ENCODE measurements at regions of chr18 and their contacts with region 1.

Region 1: GRCh38 chr18:3665780-3666525 is 216.0 kb downstream of the TGIF1 start:
- DNase-seq: peak; percentile 73 to 86 (median 78)
- ATAC-seq: peak; percentile 76 to 94 (median 90)
- H3K4me3 ChIP-seq: peak overlapping the region in 10 of 12 donors; percentile 20 to 43 (median 33)
- H3K27ac ChIP-seq: peak overlapping the region in 9 of 12 donors; percentile 8 to 68 (median 53)
- H3K4me1 ChIP-seq: peaks cover 0 to 27% (median 3%) of the 10 kb centered on the region in 12 donors
- H3K27me3 ChIP-seq: no peaks in the 10 kb centered on the region
- CTCF ChIP-seq: peak; percentile 87 to 98 (median 91)
- POLR2A ChIP-seq: no peak

Region 2: GRCh38 chr18:3297025-3297984 is 368.6 kb before region 1 on chr18:
- intact Hi-C with region 1: loop called in 1 of 10 experiments (anchors 5 kb)
- DNase-seq: peak; percentile 76 to 89 (median 84)
- ATAC-seq: peak; percentile 85 to 93 (median 92)
- H3K4me3 ChIP-seq: peak overlapping the region; percentile 15 to 76 (median 55)
- H3K27ac ChIP-seq: peak overlapping the region in 3 of 12 donors; percentile 7 to 39 (median 17)
- H3K4me1 ChIP-seq: peaks cover 0 to 12% (median 3%) of the 10 kb centered on the region in 12 donors
- H3K27me3 ChIP-seq: peaks cover 0 to 4% (median 0%) of the 10 kb centered on the region in 9 donors
- CTCF ChIP-seq: peak in 11 of 12 donors; percentile 21 to 53 (median 37)
- POLR2A ChIP-seq: no peak

Region 3: GRCh38 chr18:3447895-3448837 is 217.8 kb before region 1 on chr18:
- intact Hi-C with region 1: loop called in 8 of 10 experiments (anchors 2 to 10 kb)
- DNase-seq: peak; percentile 94 to 96 (median 96)
- ATAC-seq: peak; percentile 86 to 92 (median 87)
- H3K4me3 ChIP-seq: peak overlapping the region; percentile 65 to 93 (median 78)
- H3K27ac ChIP-seq: peak overlapping the region; percentile 92 to 100 (median 97)
- H3K4me1 ChIP-seq: peaks cover 0 to 27% (median 13%) of the 10 kb centered on the region in 12 donors
- H3K27me3 ChIP-seq: no peaks in the 10 kb centered on the region
- CTCF ChIP-seq: peak in 4 of 12 donors; percentile 3 to 31 (median 20)
- POLR2A ChIP-seq: peak in 1 of 2 donors; percentile 91

Region 4: GRCh38 chr18:3454365-3455089 is 211.4 kb before region 1 on chr18:
- intact Hi-C with region 1: loop called in 9 of 10 experiments (anchors 2 to 10 kb)
- DNase-seq: peak in 2 of 5 donors; percentile 35 to 48
- ATAC-seq: no peak
- H3K4me3 ChIP-seq: peak overlapping the region in 11 of 12 donors; percentile 8 to 93 (median 77)
- H3K27ac ChIP-seq: peak overlapping the region; percentile 36 to 100 (median 97)
- H3K4me1 ChIP-seq: peaks cover 0 to 53% (median 20%) of the 10 kb centered on the region in 12 donors
- H3K27me3 ChIP-seq: no peaks in the 10 kb centered on the region
- CTCF ChIP-seq: peak; percentile 49 to 84 (median 73)
- POLR2A ChIP-seq: no peak

Region 5: GRCh38 chr18:3605486-3605952 is 60.4 kb before region 1 on chr18:
- intact Hi-C with region 1: no loop called
- DNase-seq: no peak
- ATAC-seq: no peak
- H3K4me3 ChIP-seq: peak overlapping the region in 11 of 12 donors; percentile 5 to 61 (median 48)
- H3K27ac ChIP-seq: peak overlapping the region; percentile 70 to 94 (median 87)
- H3K4me1 ChIP-seq: peaks cover 7 to 51% (median 30%) of the 10 kb centered on the region in 12 donors
- H3K27me3 ChIP-seq: no peaks in the 10 kb centered on the region
- CTCF ChIP-seq: no peak
- POLR2A ChIP-seq: no peak

Region 6: GRCh38 chr18:3816610-3817363 is 150.8 kb after region 1 on chr18:
- intact Hi-C with region 1: no loop called
- DNase-seq: no peak
- ATAC-seq: peak in 2 of 4 donors; percentile 70 to 78
- H3K4me3 ChIP-seq: no peak overlapping the region
- H3K27ac ChIP-seq: no peak overlapping the region
- H3K4me1 ChIP-seq: no peaks in the 10 kb centered on the region
- H3K27me3 ChIP-seq: no peaks in the 10 kb centered on the region
- CTCF ChIP-seq: no peak
- POLR2A ChIP-seq: no peak